CD4-positive, alpha-beta T cell (primary cell): ENCODE measurements at regions of chr10 and their contacts with region 1.

Region 1: DNA sequence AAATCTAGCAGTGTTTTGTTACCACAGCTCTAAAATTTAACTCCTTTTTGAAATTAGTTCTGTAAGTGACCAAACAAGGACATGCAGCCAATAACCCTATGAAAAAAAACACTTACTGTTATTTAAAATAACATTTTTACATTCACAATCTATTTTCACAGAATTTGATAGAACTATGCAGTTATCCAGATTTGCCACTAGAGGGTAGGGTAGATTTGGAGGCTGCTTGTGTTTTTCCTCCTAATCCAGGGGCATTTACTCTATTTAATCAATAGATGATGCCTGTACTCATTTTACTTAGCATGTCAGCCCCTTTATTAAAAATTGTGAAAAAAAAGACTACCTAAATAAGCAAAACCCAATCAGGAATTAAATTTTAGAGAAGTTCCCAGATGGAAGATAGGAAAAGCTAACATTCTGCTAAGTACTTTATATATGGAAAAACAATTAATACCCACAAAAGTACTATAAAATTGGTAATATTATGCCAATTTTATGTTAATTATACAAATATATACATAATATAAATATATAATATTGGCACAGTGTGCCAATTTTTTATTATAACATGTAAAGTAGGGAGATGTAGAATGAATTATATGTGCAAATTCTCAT is 18.1 kb upstream of the LIPK start:
- DNase-seq: peak in 3 of 14 experiments; percentile 34 to 41 (median 34)
- ATAC-seq: peak; percentile 49
- H3K4me3 ChIP-seq: no peak overlapping the region
- H3K4me3 Mint-ChIP-seq: no peak overlapping the region
- H3K27ac ChIP-seq: no peak overlapping the region
- H3K27ac Mint-ChIP-seq: no peak overlapping the region
- H3K4me1 ChIP-seq: no peaks in the 10 kb centered on the region
- H3K4me1 Mint-ChIP-seq: no peaks in the 10 kb centered on the region
- H3K27me3 ChIP-seq: no peaks in the 10 kb centered on the region
- H3K27me3 Mint-ChIP-seq: peaks cover 2% of the 10 kb centered on the region
- CTCF ChIP-seq: peak; percentile 87

Region 2: DNA sequence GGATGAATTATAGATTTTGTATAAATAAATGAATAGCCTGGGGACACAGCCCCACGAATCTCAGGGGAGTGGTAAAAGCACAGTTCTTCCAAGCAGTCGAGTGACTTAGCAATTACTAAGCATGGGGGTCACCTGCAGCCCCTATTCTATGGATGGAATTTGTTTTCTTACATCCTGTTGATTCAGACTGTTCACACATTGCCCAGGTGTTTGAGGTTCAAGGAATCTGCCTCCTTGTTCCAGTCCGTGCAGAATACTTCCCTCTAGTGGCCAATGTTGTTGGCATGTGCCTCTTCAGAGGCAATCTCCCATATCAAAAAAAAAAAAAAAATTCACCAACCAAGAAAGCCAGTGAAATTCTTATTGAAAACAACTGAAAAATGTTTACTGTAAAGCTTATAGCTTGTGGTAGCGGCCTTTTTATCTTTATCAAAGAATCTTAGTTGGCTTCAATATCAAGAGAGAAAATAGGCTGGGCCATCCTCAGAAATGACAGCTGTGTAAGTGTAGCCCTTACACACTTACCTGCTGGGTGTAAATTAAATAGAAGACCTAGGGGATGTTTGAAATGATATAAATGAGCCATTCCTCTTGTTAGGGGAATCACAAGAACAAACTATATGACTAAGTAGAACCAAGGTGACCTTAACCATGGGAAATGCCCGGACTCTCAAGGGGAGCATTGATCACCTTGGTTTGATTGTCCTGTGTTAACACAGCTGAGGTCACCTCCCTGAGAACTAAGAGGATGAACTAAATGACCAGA is 122.4 kb after region 1 on chr10:
- CTCF ChIA-PET with region 1: interaction called, 3 read pairs
- POLR2A ChIA-PET with region 1: no interaction called
- intact Hi-C with region 1: loop called (anchors 5 kb)
- DNase-seq: peak in 9 of 14 experiments; percentile 9 to 76 (median 21)
- ATAC-seq: peak; percentile 82
- H3K4me3 ChIP-seq: no peak overlapping the region
- H3K4me3 Mint-ChIP-seq: no peak overlapping the region
- H3K27ac ChIP-seq: no peak overlapping the region
- H3K27ac Mint-ChIP-seq: no peak overlapping the region
- H3K4me1 ChIP-seq: peaks cover 3% of the 10 kb centered on the region
- H3K4me1 Mint-ChIP-seq: peaks cover 15% of the 10 kb centered on the region
- H3K27me3 ChIP-seq: no peaks in the 10 kb centered on the region
- H3K27me3 Mint-ChIP-seq: no peaks in the 10 kb centered on the region
- CTCF ChIP-seq: peak; percentile 86

Region 3: GRCh38 chr10:88926566-88927415 is 238.8 kb after region 1 on chr10:
- CTCF ChIA-PET with region 1: no interaction called
- POLR2A ChIA-PET with region 1: no interaction called
- intact Hi-C with region 1: loop called in 1 of 2 experiments (anchors 5 kb)
- DNase-seq: no peak
- ATAC-seq: no peak
- H3K4me3 ChIP-seq: no peak overlapping the region
- H3K4me3 Mint-ChIP-seq: no peak overlapping the region
- H3K27ac ChIP-seq: no peak overlapping the region
- H3K27ac Mint-ChIP-seq: no peak overlapping the region
- H3K4me1 ChIP-seq: no peaks in the 10 kb centered on the region
- H3K4me1 Mint-ChIP-seq: no peaks in the 10 kb centered on the region
- H3K27me3 ChIP-seq: no peaks in the 10 kb centered on the region
- H3K27me3 Mint-ChIP-seq: no peaks in the 10 kb centered on the region
- CTCF ChIP-seq: no peak